ENCODE measurements at regions of chrX and their contacts with region 1.

Region 1: GRCh38 chrX:53571494-53571893 is 115.0 kb downstream of the HUWE1 start:
- DNase-seq: no peak
- ATAC-seq: no peak
- H3K4me3 ChIP-seq: no peak overlapping the region
- H3K4me3 Mint-ChIP-seq: no peak overlapping the region
- H3K27ac ChIP-seq: no peak overlapping the region
- H3K27ac Mint-ChIP-seq: no peak overlapping the region
- H3K4me1 ChIP-seq: no peaks in the 10 kb centered on the region
- H3K4me1 Mint-ChIP-seq: no peaks in the 10 kb centered on the region
- H3K27me3 ChIP-seq: no peaks in the 10 kb centered on the region
- H3K27me3 Mint-ChIP-seq: no peaks in the 10 kb centered on the region
- CTCF ChIP-seq: no peak

Region 2: GRCh38 chrX:53605004-53605403 is 33.5 kb after region 1 on chrX:
- CTCF ChIA-PET with region 1: no interaction called
- POLR2A ChIA-PET with region 1: no interaction called
- intact Hi-C with region 1: loop called in 1 of 2 experiments (anchors 5 kb)
- DNase-seq: no peak
- ATAC-seq: no peak
- H3K4me3 ChIP-seq: no peak overlapping the region
- H3K4me3 Mint-ChIP-seq: no peak overlapping the region
- H3K27ac ChIP-seq: no peak overlapping the region
- H3K27ac Mint-ChIP-seq: no peak overlapping the region
- H3K4me1 ChIP-seq: no peaks in the 10 kb centered on the region
- H3K4me1 Mint-ChIP-seq: peaks cover 3% of the 10 kb centered on the region
- H3K27me3 ChIP-seq: no peaks in the 10 kb centered on the region
- H3K27me3 Mint-ChIP-seq: no peaks in the 10 kb centered on the region
- CTCF ChIP-seq: no peak

Measured in CD8-positive, alpha-beta T cell (primary cell).